ENCODE measurements at regions of chr13 and their contacts with region 1.

Region 1: DNA sequence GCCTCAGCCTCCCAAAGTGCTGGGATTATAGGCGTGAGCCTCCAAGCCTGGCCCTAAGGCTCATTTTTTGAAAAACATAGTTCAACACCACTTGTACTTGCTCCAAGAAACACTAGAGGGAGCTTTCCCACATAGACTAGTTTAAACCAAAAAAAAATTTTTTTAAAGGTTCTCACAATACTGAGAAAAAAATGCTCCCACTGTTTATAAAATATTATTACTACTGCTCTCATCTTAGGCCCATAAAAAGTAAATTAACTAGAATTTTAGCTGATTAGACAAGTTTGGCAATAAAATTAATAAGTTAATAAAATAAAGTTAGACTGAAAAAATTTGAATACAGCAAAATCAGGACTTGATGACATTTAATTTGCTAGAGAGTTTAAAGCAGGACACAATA is 109.5 kb downstream of the TBC1D4 start:
- DNase-seq: peak in 1 of 4 donors; percentile 43
- ATAC-seq: peak; percentile 88
- H3K4me3 ChIP-seq: no peak overlapping the region
- H3K27ac ChIP-seq: peak overlapping the region in 1 of 4 donors; percentile 7
- H3K4me1 ChIP-seq: peaks cover 6% of the 10 kb centered on the region
- H3K27me3 ChIP-seq: no peaks in the 10 kb centered on the region
- CTCF ChIP-seq: peak; percentile 42 to 77 (median 75)
- POLR2A ChIP-seq: no peak

Region 2: DNA sequence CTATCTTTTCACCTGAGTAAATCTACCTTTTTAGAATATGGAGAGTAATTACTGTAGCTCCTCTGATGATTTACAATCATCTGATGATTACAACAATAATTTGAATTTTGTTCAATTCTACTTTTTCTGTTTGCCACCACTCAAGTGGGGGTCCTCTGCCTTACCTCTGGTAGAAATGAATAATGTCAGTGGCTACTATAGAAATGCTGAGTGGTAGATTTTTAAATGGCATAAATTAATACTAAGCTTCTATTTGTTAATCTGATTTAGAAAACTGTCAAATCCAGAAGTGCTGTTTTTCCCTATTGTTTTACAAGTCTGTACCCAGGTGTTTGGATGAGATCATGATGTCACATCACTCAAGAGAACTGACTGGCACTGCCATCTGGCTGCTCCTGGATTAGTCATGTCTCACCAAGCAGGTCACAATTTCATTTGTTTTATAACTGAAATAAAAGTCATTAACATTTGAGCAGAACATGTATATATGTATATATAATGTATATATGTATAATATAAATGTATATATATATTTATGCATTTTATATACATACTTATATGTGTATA is 385.3 kb before region 1 on chr13:
- intact Hi-C with region 1: no loop called
- DNase-seq: no peak
- ATAC-seq: no peak
- H3K4me3 ChIP-seq: no peak overlapping the region
- H3K27ac ChIP-seq: no peak overlapping the region
- H3K4me1 ChIP-seq: no peaks in the 10 kb centered on the region
- H3K27me3 ChIP-seq: no peaks in the 10 kb centered on the region
- CTCF ChIP-seq: no peak
- POLR2A ChIP-seq: no peak

Region 3: GRCh38 chr13:75482070-75482819 is 109.7 kb after region 1 on chr13 and contains the start of gene TBC1D4:
- intact Hi-C with region 1: loop called (anchors 5 kb)
- DNase-seq: peak; percentile 83 to 89 (median 86)
- ATAC-seq: peak; percentile 87
- H3K4me3 ChIP-seq: peak within 1 kb of the TSS; percentile 49 to 98
- H3K27ac ChIP-seq: peak within 1 kb of the TSS; percentile 72 to 86 (median 83)
- H3K4me1 ChIP-seq: peaks cover 25% of the 10 kb centered on the region
- H3K27me3 ChIP-seq: no peaks in the 10 kb centered on the region
- CTCF ChIP-seq: peak; percentile 81 to 93 (median 91)
- POLR2A ChIP-seq: peak; percentile 40 to 68 (median 67)
- total RNA-seq, gene TBC1D4: 28.3 to 29.7 TPM

Region 4: GRCh38 chr13:75544681-75545363 is 172.3 kb after region 1 on chr13:
- intact Hi-C with region 1: loop called (anchors 5 kb)
- DNase-seq: no peak
- ATAC-seq: no peak
- H3K4me3 ChIP-seq: no peak overlapping the region
- H3K27ac ChIP-seq: no peak overlapping the region
- H3K4me1 ChIP-seq: peaks cover 5% of the 10 kb centered on the region
- H3K27me3 ChIP-seq: no peaks in the 10 kb centered on the region
- CTCF ChIP-seq: no peak
- POLR2A ChIP-seq: no peak

Region 5: GRCh38 chr13:75554981-75555380 is 182.5 kb after region 1 on chr13:
- intact Hi-C with region 1: no loop called
- DNase-seq: no peak
- ATAC-seq: no peak
- H3K4me3 ChIP-seq: no peak overlapping the region
- H3K27ac ChIP-seq: no peak overlapping the region
- H3K4me1 ChIP-seq: peaks cover 16% of the 10 kb centered on the region
- H3K27me3 ChIP-seq: no peaks in the 10 kb centered on the region
- CTCF ChIP-seq: no peak
- POLR2A ChIP-seq: no peak

Measured in body of pancreas (tissue), 4 donors.